Breast epithelium (tissue), 4 donors: ENCODE measurements at regions of chr16 and their contacts with region 1.

Region 1: GRCh38 chr16:67987460-67988160 is 7.3 kb upstream of the DPEP3 start:
- DNase-seq: no peak
- H3K4me3 ChIP-seq: no peak overlapping the region
- H3K27ac ChIP-seq: peak overlapping the region in 1 of 2 donors; percentile 48
- H3K4me1 ChIP-seq: no peaks in the 10 kb centered on the region
- H3K27me3 ChIP-seq: no peaks in the 10 kb centered on the region
- CTCF ChIP-seq: no peak
- POLR2A ChIP-seq: no peak

Region 2: GRCh38 chr16:67892899-67893742 is 94.5 kb before region 1 on chr16 and contains the start of gene PSKH1:
- intact Hi-C with region 1: loop called (anchors 5 kb)
- DNase-seq: peak; percentile 94 to 97
- H3K4me3 ChIP-seq: peak within 1 kb of the TSS; percentile 95 to 98 (median 96)
- H3K27ac ChIP-seq: peak within 1 kb of the TSS; percentile 97 to 98
- H3K4me1 ChIP-seq: peaks cover 0 to 8% of the 10 kb centered on the region in 2 donors
- H3K27me3 ChIP-seq: no peaks in the 10 kb centered on the region
- CTCF ChIP-seq: no peak
- POLR2A ChIP-seq: no peak
- total RNA-seq, gene PSKH1: 17.3 to 20.5 (median 17.4) TPM